Mammary epithelial cell (primary cell): ENCODE measurements at regions of chr5 and their contacts with region 1.

Region 1: GRCh38 chr5:31825518-31826068 is 186.7 kb downstream of the PDZD2 start:
- DNase-seq: peak; percentile 61
- H3K4me3 ChIP-seq: no peak overlapping the region
- H3K27ac ChIP-seq: no peak overlapping the region
- H3K4me1 ChIP-seq: peaks cover 3% of the 10 kb centered on the region
- H3K27me3 ChIP-seq: no peaks in the 10 kb centered on the region
- CTCF ChIP-seq: peak; percentile 67 to 72

Region 2: GRCh38 chr5:31581498-31582099 is 244.0 kb before region 1 on chr5:
- CTCF ChIA-PET with region 1: no interaction called
- dilution Hi-C with region 1: no loop called
- in situ Hi-C with region 1: no loop called
- intact Hi-C with region 1: no loop called
- DNase-seq: peak; percentile 14
- H3K4me3 ChIP-seq: no peak overlapping the region
- H3K27ac ChIP-seq: no peak overlapping the region
- H3K4me1 ChIP-seq: no peaks in the 10 kb centered on the region
- H3K27me3 ChIP-seq: no peaks in the 10 kb centered on the region
- CTCF ChIP-seq: peak; percentile 24 to 51

Region 3: GRCh38 chr5:31908396-31908795 is 82.8 kb after region 1 on chr5:
- CTCF ChIA-PET with region 1: no interaction called
- dilution Hi-C with region 1: loop called (anchors 5 kb)
- in situ Hi-C with region 1: no loop called
- intact Hi-C with region 1: no loop called
- DNase-seq: no peak
- H3K4me3 ChIP-seq: no peak overlapping the region
- H3K27ac ChIP-seq: no peak overlapping the region
- H3K4me1 ChIP-seq: peaks cover 14% of the 10 kb centered on the region
- H3K27me3 ChIP-seq: no peaks in the 10 kb centered on the region
- CTCF ChIP-seq: no peak

Region 4: DNA sequence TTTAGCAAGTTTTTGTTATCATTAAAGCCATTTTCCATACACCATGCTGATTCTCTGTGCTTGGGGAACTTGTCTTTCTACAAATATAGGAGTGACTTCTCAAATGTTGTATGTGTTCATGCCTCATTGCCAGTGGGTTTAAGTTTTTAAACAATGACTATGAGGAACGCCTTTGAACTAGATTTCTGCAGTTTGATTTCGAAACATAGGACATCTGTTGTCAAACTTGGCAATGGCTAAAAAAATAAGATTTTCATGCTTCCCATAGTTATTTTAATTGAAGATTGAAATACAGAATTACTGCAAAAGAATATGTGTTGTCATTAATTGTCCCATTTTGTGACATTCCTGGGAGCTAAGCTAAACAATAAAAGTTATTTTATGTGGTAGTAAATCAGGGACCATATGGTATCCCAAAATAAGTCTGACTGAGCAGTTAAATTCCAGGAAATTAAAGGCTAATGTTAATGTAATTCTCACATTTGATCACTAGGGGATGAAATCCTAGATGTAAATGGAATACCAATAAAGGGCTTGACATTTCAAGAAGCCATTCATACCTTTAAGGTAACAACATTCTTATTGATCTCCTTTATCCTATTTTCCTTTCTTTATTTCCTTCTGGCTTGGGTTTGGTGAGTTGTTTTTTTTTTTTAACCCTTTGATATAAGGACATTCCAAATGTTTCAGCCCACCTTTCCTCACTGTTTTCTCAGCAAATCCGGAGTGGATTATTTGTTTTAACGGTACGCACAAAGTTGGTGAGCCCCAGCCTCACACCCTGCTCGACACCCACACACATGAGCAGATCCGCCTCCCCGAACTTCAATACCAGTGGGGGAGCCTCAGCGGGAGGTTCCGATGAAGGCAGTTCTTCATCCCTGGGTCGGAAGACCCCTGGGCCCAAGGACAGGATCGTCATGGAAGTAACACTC is 231.8 kb after region 1 on chr5:
- CTCF ChIA-PET with region 1: no interaction called
- dilution Hi-C with region 1: loop called (anchors 5 kb)
- in situ Hi-C with region 1: no loop called
- intact Hi-C with region 1: no loop called
- DNase-seq: no peak
- H3K4me3 ChIP-seq: no peak overlapping the region
- H3K27ac ChIP-seq: no peak overlapping the region
- H3K4me1 ChIP-seq: peaks cover 11% of the 10 kb centered on the region
- H3K27me3 ChIP-seq: peaks cover 1% of the 10 kb centered on the region
- CTCF ChIP-seq: peak; percentile 30 to 32

Region 5: DNA sequence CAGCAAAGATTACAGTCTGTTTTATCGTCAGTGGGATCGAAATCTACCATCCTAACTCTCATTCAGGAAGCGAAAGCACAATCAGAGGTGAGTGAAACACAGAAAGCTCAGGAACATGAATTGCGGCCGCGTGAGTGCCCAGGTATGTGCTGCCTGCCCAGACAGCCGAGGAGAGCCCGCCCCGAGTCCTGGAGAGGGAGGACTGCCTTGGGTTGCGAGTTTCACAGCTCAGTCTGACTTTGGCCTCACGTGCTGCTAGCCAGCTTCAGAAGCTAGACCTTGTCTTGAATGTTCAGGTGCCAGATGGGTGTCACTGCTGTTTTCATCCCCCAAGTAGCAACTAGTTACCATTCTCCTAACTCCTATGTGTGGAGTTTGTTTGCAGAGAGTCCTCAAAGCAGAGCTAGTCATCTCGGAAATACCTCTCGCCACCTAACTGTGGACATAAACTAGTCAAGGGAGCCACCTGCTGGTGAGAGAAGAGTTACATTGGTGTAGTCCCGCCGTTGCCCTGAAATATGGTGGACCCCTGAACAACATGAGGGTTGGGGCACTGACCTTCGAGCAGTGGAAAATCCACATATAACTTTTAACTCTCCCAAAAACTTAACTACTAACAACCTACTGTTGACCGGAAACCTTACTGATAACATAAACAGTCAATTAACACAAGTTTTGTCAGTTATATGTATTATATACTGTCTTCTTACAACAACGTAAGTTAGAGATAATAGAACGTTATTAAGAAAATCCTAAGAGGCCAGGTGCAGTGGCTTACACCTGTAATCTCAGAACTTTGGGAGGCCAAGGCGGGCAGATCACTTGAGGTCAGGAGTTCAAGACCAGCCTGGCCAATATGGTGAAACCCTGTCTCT is 267.6 kb after region 1 on chr5:
- CTCF ChIA-PET with region 1: interaction called, 3 read pairs
- dilution Hi-C with region 1: loop called (anchors 5 kb)
- in situ Hi-C with region 1: no loop called
- intact Hi-C with region 1: loop called (anchors 1 kb)
- DNase-seq: peak; percentile 66
- H3K4me3 ChIP-seq: no peak overlapping the region
- H3K27ac ChIP-seq: no peak overlapping the region
- H3K4me1 ChIP-seq: no peaks in the 10 kb centered on the region
- H3K27me3 ChIP-seq: no peaks in the 10 kb centered on the region
- CTCF ChIP-seq: peak; percentile 61 to 78

Region 6: DNA sequence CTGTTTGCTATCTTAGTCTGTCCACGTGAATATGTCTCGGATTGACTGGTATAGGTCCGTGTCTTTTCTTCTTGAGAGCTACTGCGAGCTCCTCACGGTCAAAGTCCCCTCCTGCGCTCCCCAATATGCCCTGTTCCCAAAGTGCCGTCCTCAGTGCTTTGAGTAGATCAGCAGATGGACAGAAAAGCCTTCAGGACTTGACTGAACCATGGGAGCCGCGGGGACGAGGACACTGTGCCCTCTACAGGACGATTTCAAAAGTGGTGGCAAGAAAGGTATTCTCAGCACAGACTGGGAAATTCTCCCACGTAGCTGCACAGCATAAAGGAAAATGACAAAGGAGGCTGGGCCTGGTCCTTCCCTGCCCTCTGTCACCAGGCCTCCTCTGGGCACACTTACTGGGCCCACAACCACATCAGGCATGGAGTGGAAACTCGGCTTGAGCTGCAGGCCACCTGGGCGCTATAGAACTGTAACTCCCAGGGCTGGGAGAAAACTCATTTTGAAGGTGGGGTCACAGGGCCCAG is 503.8 kb after region 1 on chr5:
- CTCF ChIA-PET with region 1: no interaction called
- dilution Hi-C with region 1: no loop called
- in situ Hi-C with region 1: no loop called
- intact Hi-C with region 1: loop called (anchors 2 kb)
- DNase-seq: peak; percentile 41
- H3K4me3 ChIP-seq: no peak overlapping the region
- H3K27ac ChIP-seq: no peak overlapping the region
- H3K4me1 ChIP-seq: peaks cover 11% of the 10 kb centered on the region
- H3K27me3 ChIP-seq: no peaks in the 10 kb centered on the region
- CTCF ChIP-seq: peak; percentile 63 to 73